ENCODE measurements at regions of chr7 and their contacts with region 1.

Region 1: DNA sequence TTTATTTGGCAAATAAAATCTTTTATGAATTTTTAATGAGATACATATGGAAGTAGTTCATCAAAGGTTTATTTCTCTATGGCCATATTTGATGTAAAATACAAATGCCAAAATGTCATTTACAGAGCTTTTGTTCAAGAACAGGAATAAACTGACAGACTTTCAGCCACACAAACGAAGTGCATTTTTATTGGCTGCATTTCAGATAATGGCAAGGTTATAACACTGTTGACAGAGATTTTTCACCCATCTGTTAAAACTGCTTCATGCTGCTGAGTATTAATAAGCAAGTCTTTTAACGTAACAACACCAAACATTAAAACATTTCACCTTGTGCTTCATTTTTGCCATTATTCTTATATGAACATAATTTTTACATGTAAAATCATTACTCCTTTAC is 254.4 kb downstream of the ANKRD7 start:
- DNase-seq: no peak
- ATAC-seq: no peak
- H3K4me3 ChIP-seq: no peak overlapping the region
- H3K27ac ChIP-seq: no peak overlapping the region
- H3K4me1 ChIP-seq: no peaks in the 10 kb centered on the region
- H3K27me3 ChIP-seq: no peaks in the 10 kb centered on the region
- CTCF ChIP-seq: no peak
- POLR2A ChIP-seq: no peak
- RAD21 ChIP-seq: no peak

Region 2: GRCh38 chr7:118169146-118169545 is 309.8 kb before region 1 on chr7:
- CTCF ChIA-PET with region 1: no interaction called
- POLR2A ChIA-PET with region 1: no interaction called
- RAD21 ChIA-PET with region 1: no interaction called
- intact Hi-C with region 1: no loop called
- DNase-seq: no peak
- ATAC-seq: peak; percentile 57; the same call in 1 of the 2 replicates
- H3K4me3 ChIP-seq: no peak overlapping the region
- H3K27ac ChIP-seq: no peak overlapping the region
- H3K4me1 ChIP-seq: no peaks in the 10 kb centered on the region
- H3K27me3 ChIP-seq: no peaks in the 10 kb centered on the region
- CTCF ChIP-seq: peak in 1 of 3 experiments; percentile 28; a peak in 2 of 6 replicates
- POLR2A ChIP-seq: no peak
- RAD21 ChIP-seq: no peak

Region 3: GRCh38 chr7:118418433-118418832 is 60.5 kb before region 1 on chr7:
- CTCF ChIA-PET with region 1: no interaction called
- POLR2A ChIA-PET with region 1: no interaction called
- RAD21 ChIA-PET with region 1: no interaction called
- intact Hi-C with region 1: loop called (anchors 2 kb)
- DNase-seq: no peak
- ATAC-seq: no peak
- H3K4me3 ChIP-seq: no peak overlapping the region
- H3K27ac ChIP-seq: no peak overlapping the region
- H3K4me1 ChIP-seq: no peaks in the 10 kb centered on the region
- H3K27me3 ChIP-seq: no peaks in the 10 kb centered on the region
- CTCF ChIP-seq: no peak
- POLR2A ChIP-seq: no peak
- RAD21 ChIP-seq: no peak

Region 4: GRCh38 chr7:118496138-118496644 is 17.3 kb after region 1 on chr7:
- CTCF ChIA-PET with region 1: no interaction called
- POLR2A ChIA-PET with region 1: no interaction called
- RAD21 ChIA-PET with region 1: no interaction called
- intact Hi-C with region 1: no loop called
- DNase-seq: no peak
- ATAC-seq: no peak
- H3K4me3 ChIP-seq: no peak overlapping the region
- H3K27ac ChIP-seq: no peak overlapping the region
- H3K4me1 ChIP-seq: no peaks in the 10 kb centered on the region
- H3K27me3 ChIP-seq: no peaks in the 10 kb centered on the region
- CTCF ChIP-seq: no peak
- POLR2A ChIP-seq: no peak
- RAD21 ChIP-seq: no peak

Measured in HCT116 (cell line).